ENCODE measurements at regions of chr2 and their contacts with region 1.

Region 1: DNA sequence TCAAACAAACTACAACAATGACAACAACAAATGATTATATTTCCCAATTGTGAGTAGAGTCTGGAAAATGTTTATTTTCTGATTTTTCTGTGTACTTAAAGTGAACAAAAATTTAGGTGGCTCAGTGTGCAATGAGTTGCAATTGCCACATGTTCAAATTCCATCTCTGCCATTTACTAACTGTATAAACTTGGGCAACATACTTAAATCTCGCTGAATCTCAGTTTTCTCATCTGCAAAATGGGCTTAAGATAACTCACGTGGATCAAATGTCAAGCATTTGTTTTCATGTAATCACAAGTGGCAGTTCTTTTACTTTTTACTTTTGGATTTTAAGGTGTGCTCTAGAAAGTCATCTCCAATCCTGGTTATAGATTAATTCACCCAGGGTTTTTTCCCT is 416.8 kb upstream of the HNRNPA3 start:
- DNase-seq: no peak
- ATAC-seq: no peak
- H3K4me3 ChIP-seq: no peak overlapping the region
- H3K27ac ChIP-seq: no peak overlapping the region
- H3K4me1 ChIP-seq: no peaks in the 10 kb centered on the region
- H3K27me3 ChIP-seq: peaks cover 41% of the 10 kb centered on the region
- CTCF ChIP-seq: no peak
- POLR2A ChIP-seq: no peak
- RAD21 ChIP-seq: no peak

Region 2: DNA sequence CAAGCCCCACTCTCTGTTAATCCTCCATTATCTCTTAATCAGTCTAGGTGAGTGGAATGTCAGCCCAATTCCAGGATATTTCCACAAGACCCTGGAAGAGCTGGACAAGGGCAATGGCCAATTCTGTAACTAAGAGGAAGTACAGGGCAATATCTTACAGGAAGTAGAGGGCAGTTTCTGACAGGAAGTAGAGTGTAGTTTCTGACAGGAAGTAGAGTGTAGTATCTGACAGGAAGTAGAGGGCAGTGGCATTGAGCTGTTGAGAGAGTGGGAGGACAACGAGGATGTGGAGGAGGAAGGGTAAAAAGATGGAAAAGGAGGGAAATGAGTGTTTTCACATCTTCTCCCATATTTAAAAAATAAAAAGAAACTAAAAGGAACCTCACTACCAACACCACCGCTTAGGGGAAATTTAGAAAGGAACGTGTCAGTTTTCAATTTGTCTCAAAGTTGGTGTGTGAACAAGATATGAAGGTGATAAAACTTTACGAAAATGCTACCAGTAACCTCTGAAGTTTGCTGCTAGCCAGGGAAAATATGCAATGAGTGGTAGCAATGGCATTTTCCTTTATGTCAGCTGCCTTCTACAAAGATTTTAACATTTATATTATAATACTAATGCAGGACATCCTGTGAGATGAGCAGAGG is 14.1 kb before region 1 on chr2:
- CTCF ChIA-PET with region 1: no interaction called
- POLR2A ChIA-PET with region 1: no interaction called
- RAD21 ChIA-PET with region 1: no interaction called
- intact Hi-C with region 1: loop called (anchors 1 kb)
- DNase-seq: no peak
- ATAC-seq: no peak
- H3K4me3 ChIP-seq: no peak overlapping the region
- H3K27ac ChIP-seq: no peak overlapping the region
- H3K4me1 ChIP-seq: no peaks in the 10 kb centered on the region
- H3K27me3 ChIP-seq: peaks cover 21% of the 10 kb centered on the region
- CTCF ChIP-seq: no peak
- POLR2A ChIP-seq: no peak
- RAD21 ChIP-seq: no peak